Thyroid gland (tissue), 4 donors: ENCODE measurements at regions of chr6 and their contacts with region 1.

Region 1: GRCh38 chr6:18491308-18492045 is 104.3 kb downstream of the RNF144B start:
- DNase-seq: no peak
- H3K4me3 ChIP-seq: no peak overlapping the region
- H3K27ac ChIP-seq: peak overlapping the region; percentile 83 to 96 (median 95)
- H3K4me1 ChIP-seq: peaks cover 60 to 73% of the 10 kb centered on the region in 2 donors
- H3K27me3 ChIP-seq: no peaks in the 10 kb centered on the region
- CTCF ChIP-seq: no peak
- POLR2A ChIP-seq: no peak

Region 2: GRCh38 chr6:18432180-18432579 is 59.3 kb before region 1 on chr6:
- intact Hi-C with region 1: loop called (anchors 10 kb)
- DNase-seq: no peak
- H3K4me3 ChIP-seq: no peak overlapping the region
- H3K27ac ChIP-seq: peak overlapping the region; percentile 64 to 84 (median 77)
- H3K4me1 ChIP-seq: peaks cover 48 to 69% of the 10 kb centered on the region in 2 donors
- H3K27me3 ChIP-seq: no peaks in the 10 kb centered on the region
- CTCF ChIP-seq: no peak
- POLR2A ChIP-seq: no peak

Region 3: DNA sequence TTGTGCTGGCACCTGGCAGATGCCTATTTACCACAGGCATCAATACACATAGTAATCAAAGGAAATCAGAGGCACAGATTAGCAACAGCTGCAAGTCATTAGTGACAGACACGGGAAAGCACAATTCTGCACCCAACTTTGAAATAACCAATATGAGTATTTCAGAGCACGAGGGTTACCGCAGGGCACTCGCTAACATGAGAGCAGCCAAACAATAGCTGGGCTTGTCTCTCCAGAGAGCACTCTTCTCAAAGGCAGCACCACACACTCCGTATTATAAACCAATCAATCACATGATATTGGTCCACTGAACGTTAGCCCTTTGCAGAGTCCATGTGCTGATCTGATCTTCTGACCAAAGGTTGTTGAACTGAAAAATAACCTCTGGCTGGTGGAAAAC is 45.2 kb after region 1 on chr6:
- intact Hi-C with region 1: no loop called
- DNase-seq: no peak
- H3K4me3 ChIP-seq: no peak overlapping the region
- H3K27ac ChIP-seq: no peak overlapping the region
- H3K4me1 ChIP-seq: no peaks in the 10 kb centered on the region
- H3K27me3 ChIP-seq: no peaks in the 10 kb centered on the region
- CTCF ChIP-seq: no peak
- POLR2A ChIP-seq: no peak